Endothelial cell of umbilical vein (primary cell): ENCODE measurements at regions of chr20 and their contacts with region 1.

Region 1: GRCh38 chr20:21125849-21126580 is at the start of gene KIZ:
- DNase-seq: peak; percentile 97
- H3K4me3 ChIP-seq: peak within 1 kb of the TSS; percentile 57 to 97 (median 83)
- H3K27ac ChIP-seq: no peak within 1 kb of the TSS
- H3K4me1 ChIP-seq: peaks cover 13% of the 10 kb centered on the region
- H3K27me3 ChIP-seq: peaks cover 0 to 4% of the 10 kb centered on the region in 2 experiments
- CTCF ChIP-seq: peak in 1 of 2 donors; percentile 45
- POLR2A ChIP-seq: peak; percentile 62
- total RNA-seq, gene KIZ: 7.3 and 9.6 TPM in 2 replicates

Region 2: GRCh38 chr20:21048841-21049273 is 77.2 kb before region 1 on chr20:
- CTCF ChIA-PET with region 1: interaction called, 12 read pairs
- POLR2A ChIA-PET with region 1: no interaction called
- dilution Hi-C with region 1: no loop called
- intact Hi-C with region 1: loop called (anchors 2 kb)
- DNase-seq: peak; percentile 10
- H3K4me3 ChIP-seq: no peak overlapping the region
- H3K27ac ChIP-seq: no peak overlapping the region
- H3K4me1 ChIP-seq: no peaks in the 10 kb centered on the region
- H3K27me3 ChIP-seq: peaks cover 0 to 2% of the 10 kb centered on the region in 2 experiments
- CTCF ChIP-seq: peak; percentile 73 to 81
- POLR2A ChIP-seq: no peak

Region 3: GRCh38 chr20:21099751-21100577 is 26.1 kb before region 1 on chr20:
- CTCF ChIA-PET with region 1: interaction called, 3 read pairs
- POLR2A ChIA-PET with region 1: no interaction called
- dilution Hi-C with region 1: no loop called
- intact Hi-C with region 1: loop called (anchors 2 kb)
- DNase-seq: no peak
- H3K4me3 ChIP-seq: peak overlapping the region in 2 of 3 experiments; percentile 16 to 19
- H3K27ac ChIP-seq: no peak overlapping the region
- H3K4me1 ChIP-seq: peaks cover 13% of the 10 kb centered on the region
- H3K27me3 ChIP-seq: peaks cover 70 to 89% of the 10 kb centered on the region in 2 experiments
- CTCF ChIP-seq: no peak
- POLR2A ChIP-seq: no peak

Region 4: DNA sequence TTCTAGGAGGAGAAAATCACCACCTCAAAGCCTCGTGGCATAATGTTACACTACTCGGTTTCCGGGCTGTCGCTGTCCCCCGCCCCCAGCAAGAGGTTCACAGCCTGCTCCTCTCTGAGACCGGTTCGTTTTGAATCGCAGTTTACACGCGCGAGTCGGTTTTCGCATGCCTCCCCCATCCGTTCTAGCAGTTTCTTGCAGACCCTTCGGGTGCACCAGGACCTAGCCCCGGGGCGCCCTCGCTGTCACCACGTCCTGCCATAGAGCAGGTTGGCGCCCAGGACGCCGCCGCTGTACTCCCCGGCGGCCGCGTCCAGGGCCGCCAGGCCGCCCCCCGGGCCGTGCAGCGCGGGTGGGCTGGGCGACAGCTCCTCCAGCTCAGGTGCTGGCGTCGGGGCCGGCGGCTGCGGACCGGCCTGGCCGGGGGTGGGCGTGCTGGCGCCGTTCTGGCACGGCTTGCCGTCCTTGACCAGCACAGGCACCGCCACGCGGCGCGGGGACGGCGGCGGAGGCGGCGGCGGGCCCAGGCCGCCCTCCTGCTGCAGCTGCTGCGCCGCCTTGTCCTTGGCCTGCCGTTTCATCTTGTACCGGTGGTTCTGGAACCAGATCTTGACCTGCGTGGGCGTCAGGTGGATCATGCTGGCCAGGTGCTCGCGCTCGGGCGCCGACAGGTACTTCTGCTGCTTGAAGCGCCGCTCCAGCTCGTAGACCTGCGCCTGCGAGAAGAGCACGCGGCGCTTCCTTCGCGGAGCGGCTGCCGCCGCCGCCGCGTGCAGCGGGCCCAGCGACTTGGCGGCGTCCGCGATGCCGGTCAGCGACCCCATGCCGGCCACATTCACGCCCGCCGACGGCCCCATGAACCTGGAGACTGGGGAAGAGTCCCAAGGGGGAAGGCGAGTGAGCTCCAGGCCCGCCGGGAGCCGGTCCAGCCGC is 269.9 kb after region 1 on chr20:
- CTCF ChIA-PET with region 1: no interaction called
- POLR2A ChIA-PET with region 1: no interaction called
- dilution Hi-C with region 1: no loop called
- intact Hi-C with region 1: loop called (anchors 10 kb)
- DNase-seq: peak; percentile 32
- H3K4me3 ChIP-seq: no peak overlapping the region
- H3K27ac ChIP-seq: no peak overlapping the region
- H3K4me1 ChIP-seq: peaks cover 7% of the 10 kb centered on the region
- H3K27me3 ChIP-seq: peaks cover 70 to 100% of the 10 kb centered on the region in 2 experiments
- CTCF ChIP-seq: no peak
- POLR2A ChIP-seq: no peak